Caco-2 (cell line): ENCODE measurements at regions of chr1 and their contacts with region 1.

Region 1: DNA sequence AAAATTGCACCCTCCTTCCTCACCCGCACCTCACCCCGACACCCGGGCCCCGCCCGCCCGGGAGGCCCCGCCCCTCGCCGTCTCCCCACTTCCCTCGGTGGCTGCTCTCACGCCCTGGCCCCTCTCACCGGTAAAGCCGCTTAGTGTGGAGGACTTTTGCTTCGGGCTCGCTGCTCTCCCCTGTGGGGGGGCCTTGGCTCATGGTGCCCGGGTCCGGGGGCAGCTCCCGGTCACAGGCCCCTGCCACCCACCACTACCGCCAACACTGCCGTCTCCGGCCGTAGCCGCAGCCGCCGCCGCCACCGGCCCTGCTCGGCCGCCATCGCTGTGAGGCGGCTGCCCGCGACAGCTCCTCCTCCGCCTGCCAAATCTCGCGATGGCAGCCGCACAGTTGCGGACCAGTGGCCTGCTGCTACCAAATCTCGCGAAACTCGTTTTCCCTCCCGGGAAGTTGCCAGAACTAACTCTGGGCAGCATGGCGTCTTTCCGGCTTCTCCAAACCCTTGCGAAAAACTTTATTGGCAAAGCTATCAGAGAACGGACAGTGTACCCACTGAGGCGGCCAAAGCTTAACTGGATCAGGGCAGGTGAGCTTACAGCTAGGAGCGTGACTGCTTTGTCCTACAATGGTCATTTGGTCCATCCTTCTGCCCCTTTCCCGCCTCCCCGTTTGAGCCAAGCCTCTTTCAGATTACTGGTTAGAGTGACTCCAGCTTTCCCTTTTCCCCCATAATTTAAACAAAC is at the start of gene SMG5:
- DNase-seq: peak; percentile 98
- H3K4me3 ChIP-seq: peak within 1 kb of the TSS; percentile 78
- H3K4me3 Mint-ChIP-seq: peak within 1 kb of the TSS; percentile 78
- H3K27ac Mint-ChIP-seq: peak within 1 kb of the TSS; percentile 61
- H3K4me1 ChIP-seq: peaks cover 24% of the 10 kb centered on the region
- H3K4me1 Mint-ChIP-seq: peaks cover 17% of the 10 kb centered on the region
- H3K27me3 ChIP-seq: no peaks in the 10 kb centered on the region
- H3K27me3 Mint-ChIP-seq: no peaks in the 10 kb centered on the region
- CTCF ChIP-seq: no peak
- total RNA-seq, gene SMG5: 146 and 155 TPM in 2 replicates

Region 2: DNA sequence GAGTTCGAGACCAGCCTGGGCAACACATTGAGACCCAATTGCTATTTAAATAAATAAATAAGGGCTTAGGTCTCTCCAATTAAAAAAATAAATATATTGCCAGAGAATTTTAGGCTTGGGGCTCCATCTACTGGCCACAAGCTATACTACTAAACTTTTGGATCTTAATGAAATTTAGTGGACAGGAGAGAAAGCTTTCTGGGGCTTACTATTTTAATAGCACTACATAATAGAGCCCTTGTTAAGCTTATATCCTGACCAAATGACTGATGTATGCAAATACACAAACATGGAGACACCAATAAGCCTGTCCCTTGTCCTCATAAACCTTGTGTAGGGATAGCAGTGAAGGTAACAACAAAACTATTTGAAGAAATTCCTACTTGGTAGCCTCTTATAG is 37.0 kb after region 1 on chr1:
- CTCF ChIA-PET with region 1: interaction called, 5 read pairs
- POLR2A ChIA-PET with region 1: no interaction called
- intact Hi-C with region 1: loop called (anchors 1 kb)
- DNase-seq: peak in 1 of 2 experiments; percentile 40
- H3K4me3 ChIP-seq: no peak overlapping the region
- H3K4me3 Mint-ChIP-seq: no peak overlapping the region
- H3K27ac Mint-ChIP-seq: no peak overlapping the region
- H3K4me1 ChIP-seq: no peaks in the 10 kb centered on the region
- H3K4me1 Mint-ChIP-seq: no peaks in the 10 kb centered on the region
- H3K27me3 ChIP-seq: no peaks in the 10 kb centered on the region
- H3K27me3 Mint-ChIP-seq: no peaks in the 10 kb centered on the region
- CTCF ChIP-seq: peak; percentile 57 to 60

Region 3: GRCh38 chr1:156338180-156338973 is 55.7 kb after region 1 on chr1 and contains the starts of genes CCT3 and TSACC:
- CTCF ChIA-PET with region 1: no interaction called
- POLR2A ChIA-PET with region 1: interaction called, 6 read pairs
- intact Hi-C with region 1: loop called (anchors 1 kb)
- DNase-seq: peak; percentile 99 to 100
- H3K4me3 ChIP-seq: peak within 1 kb of the TSS; percentile 90
- H3K4me3 Mint-ChIP-seq: peak within 1 kb of the TSS; percentile 97
- H3K27ac Mint-ChIP-seq: peak within 1 kb of the TSS; percentile 75
- H3K4me1 ChIP-seq: no peaks in the 10 kb centered on the region
- H3K4me1 Mint-ChIP-seq: no peaks in the 10 kb centered on the region
- H3K27me3 ChIP-seq: no peaks in the 10 kb centered on the region
- H3K27me3 Mint-ChIP-seq: no peaks in the 10 kb centered on the region
- CTCF ChIP-seq: no peak
- total RNA-seq, gene CCT3: 340 and 380 TPM in 2 replicates
- total RNA-seq, gene TSACC: 2.8 and 3.9 TPM in 2 replicates

Region 4: GRCh38 chr1:156540791-156541383 is 258.2 kb after region 1 on chr1:
- CTCF ChIA-PET with region 1: no interaction called
- POLR2A ChIA-PET with region 1: no interaction called
- intact Hi-C with region 1: no loop called
- DNase-seq: no peak
- H3K4me3 ChIP-seq: no peak overlapping the region
- H3K4me3 Mint-ChIP-seq: no peak overlapping the region
- H3K27ac Mint-ChIP-seq: no peak overlapping the region
- H3K4me1 ChIP-seq: peaks cover 5% of the 10 kb centered on the region; the same call in 1 of the 2 replicates
- H3K4me1 Mint-ChIP-seq: peaks cover 16% of the 10 kb centered on the region
- H3K27me3 ChIP-seq: no peaks in the 10 kb centered on the region
- H3K27me3 Mint-ChIP-seq: no peaks in the 10 kb centered on the region
- CTCF ChIP-seq: no peak